ENCODE measurements at regions of chr4 and their contacts with region 1.

Region 1: DNA sequence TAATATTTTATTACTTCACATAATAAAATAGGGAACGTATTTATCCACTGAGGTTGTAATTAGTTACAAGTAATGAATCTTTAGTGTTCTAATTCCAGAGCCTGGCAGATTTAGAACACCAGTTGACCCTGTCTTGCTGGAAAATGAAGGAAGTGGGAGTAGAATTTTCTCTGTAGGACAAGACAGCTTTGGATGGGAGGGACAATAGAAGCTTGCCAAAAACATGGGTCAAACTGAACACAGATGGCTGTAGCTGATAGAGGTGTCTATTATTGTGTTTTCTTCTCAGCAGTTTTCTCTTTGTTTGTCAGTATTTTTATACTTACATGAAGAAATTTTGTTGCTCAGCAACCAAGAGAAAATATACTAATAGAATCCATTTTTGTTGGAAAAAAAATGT is 20.2 kb downstream of the FAT4 start:
- DNase-seq: no peak
- ATAC-seq: peak in 3 of 4 donors; percentile 53 to 62 (median 56)
- H3K4me3 ChIP-seq: no peak overlapping the region
- H3K27ac ChIP-seq: peak overlapping the region in 3 of 12 donors; percentile 2 to 38 (median 25)
- H3K4me1 ChIP-seq: peaks cover 0 to 69% (median 21%) of the 10 kb centered on the region in 12 donors
- H3K27me3 ChIP-seq: no peaks in the 10 kb centered on the region
- CTCF ChIP-seq: no peak
- POLR2A ChIP-seq: no peak

Region 2: GRCh38 chr4:125389713-125390112 is 54.8 kb after region 1 on chr4:
- intact Hi-C with region 1: loop called in 2 of 10 experiments (anchors 5 to 10 kb)
- DNase-seq: no peak
- ATAC-seq: peak; percentile 69 to 87 (median 79)
- H3K4me3 ChIP-seq: peak overlapping the region in 2 of 12 donors; percentile 3 to 15
- H3K27ac ChIP-seq: peak overlapping the region; percentile 10 to 87 (median 72)
- H3K4me1 ChIP-seq: peaks cover 10 to 71% (median 35%) of the 10 kb centered on the region in 12 donors
- H3K27me3 ChIP-seq: no peaks in the 10 kb centered on the region
- CTCF ChIP-seq: no peak
- POLR2A ChIP-seq: no peak

Region 3: DNA sequence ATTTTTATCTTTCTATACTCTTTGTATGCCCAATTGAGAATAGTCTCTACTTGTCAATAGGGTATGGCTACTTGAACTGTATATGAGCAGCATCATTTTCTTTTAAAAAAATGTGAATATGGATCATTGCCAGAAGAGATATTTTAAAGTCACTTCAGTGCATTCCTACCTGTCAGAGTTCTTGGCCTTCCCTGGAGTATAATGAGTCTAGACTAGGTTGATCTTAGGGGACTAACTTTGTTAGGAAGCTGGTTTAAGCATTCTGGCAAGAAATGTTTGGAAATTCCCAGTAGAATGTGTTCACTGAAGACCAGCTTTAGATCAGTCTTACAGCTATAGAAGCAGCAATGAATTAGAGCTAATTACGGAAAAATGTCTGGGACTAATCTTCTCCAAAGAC is 158.0 kb after region 1 on chr4:
- intact Hi-C with region 1: no loop called
- DNase-seq: no peak
- ATAC-seq: no peak
- H3K4me3 ChIP-seq: no peak overlapping the region
- H3K27ac ChIP-seq: no peak overlapping the region
- H3K4me1 ChIP-seq: no peaks in the 10 kb centered on the region
- H3K27me3 ChIP-seq: no peaks in the 10 kb centered on the region
- CTCF ChIP-seq: no peak
- POLR2A ChIP-seq: no peak

Region 4: DNA sequence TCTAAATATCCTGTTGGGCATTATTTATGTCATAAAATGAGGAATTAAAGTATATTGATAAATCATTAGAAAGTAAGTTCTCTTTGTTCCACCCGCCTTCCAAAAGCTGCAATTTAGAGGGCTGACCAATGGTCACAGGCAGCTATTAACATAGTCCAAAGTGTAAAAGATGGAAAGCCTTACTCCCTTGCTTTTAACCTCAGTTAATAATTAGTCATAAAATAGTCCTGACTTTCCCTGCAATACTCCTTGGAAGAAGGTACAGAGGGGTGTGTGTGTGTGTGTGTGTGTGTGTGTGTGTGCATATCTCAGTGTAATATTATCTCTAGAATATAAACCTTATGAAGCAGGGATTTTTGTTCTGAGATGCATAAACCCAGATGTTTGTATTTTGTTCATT is 255.2 kb after region 1 on chr4:
- intact Hi-C with region 1: no loop called
- DNase-seq: no peak
- ATAC-seq: no peak
- H3K4me3 ChIP-seq: no peak overlapping the region
- H3K27ac ChIP-seq: no peak overlapping the region
- H3K4me1 ChIP-seq: no peaks in the 10 kb centered on the region
- H3K27me3 ChIP-seq: no peaks in the 10 kb centered on the region
- CTCF ChIP-seq: no peak
- POLR2A ChIP-seq: no peak